ENCODE measurements at regions of chr2 and their contacts with region 1.

Region 1: DNA sequence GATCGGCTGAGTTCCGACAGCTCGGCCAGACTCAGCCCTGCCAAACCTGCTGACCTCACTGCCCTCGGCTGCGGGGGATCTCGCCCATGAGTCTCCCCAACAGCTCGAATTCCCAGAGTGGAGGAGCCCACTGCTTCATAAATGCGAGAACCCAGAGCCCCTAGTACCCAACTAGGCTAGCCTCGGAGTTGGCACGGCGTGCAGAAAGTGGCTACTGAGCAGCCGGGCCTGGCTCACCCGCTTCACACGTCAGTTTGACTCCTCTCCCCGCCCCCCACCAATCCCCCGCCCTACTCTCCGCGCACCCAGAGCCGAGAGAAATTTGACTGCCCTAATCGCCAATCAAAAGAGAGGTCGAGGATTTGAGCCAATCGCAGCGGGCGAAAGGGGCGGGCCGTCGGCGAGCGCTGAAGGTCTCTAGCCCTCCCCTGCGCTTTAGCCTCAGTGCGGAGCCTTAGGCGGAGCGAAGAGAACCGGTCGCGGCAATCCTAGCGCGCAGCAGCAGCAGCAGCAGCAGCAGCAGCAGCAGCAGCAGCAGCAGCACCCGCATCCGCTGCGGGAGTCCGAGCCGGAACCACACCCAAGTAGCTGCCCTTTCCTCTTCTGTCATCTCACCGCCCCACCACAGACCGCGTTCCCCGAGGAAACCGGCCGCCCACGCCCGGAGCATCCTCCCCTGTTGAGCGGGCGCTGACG is at the start of gene GLS:
- DNase-seq: peak; percentile 92 to 97 (median 95)
- H3K4me3 ChIP-seq: peak within 1 kb of the TSS; percentile 95
- H3K4me3 Mint-ChIP-seq: peak within 1 kb of the TSS; percentile 97 to 99 (median 98)
- H3K27ac ChIP-seq: peak within 1 kb of the TSS; percentile 92
- H3K27ac Mint-ChIP-seq: peak within 1 kb of the TSS; percentile 95 to 99 (median 98)
- H3K4me1 ChIP-seq: peaks cover 54% of the 10 kb centered on the region
- H3K4me1 Mint-ChIP-seq: peaks cover 41 to 65% (median 50%) of the 10 kb centered on the region in 3 donors
- H3K27me3 ChIP-seq: no peaks in the 10 kb centered on the region
- H3K27me3 Mint-ChIP-seq: peaks cover 0 to 6% of the 10 kb centered on the region in 2 donors
- total RNA-seq, gene GLS: 209 to 222 TPM

Region 2: DNA sequence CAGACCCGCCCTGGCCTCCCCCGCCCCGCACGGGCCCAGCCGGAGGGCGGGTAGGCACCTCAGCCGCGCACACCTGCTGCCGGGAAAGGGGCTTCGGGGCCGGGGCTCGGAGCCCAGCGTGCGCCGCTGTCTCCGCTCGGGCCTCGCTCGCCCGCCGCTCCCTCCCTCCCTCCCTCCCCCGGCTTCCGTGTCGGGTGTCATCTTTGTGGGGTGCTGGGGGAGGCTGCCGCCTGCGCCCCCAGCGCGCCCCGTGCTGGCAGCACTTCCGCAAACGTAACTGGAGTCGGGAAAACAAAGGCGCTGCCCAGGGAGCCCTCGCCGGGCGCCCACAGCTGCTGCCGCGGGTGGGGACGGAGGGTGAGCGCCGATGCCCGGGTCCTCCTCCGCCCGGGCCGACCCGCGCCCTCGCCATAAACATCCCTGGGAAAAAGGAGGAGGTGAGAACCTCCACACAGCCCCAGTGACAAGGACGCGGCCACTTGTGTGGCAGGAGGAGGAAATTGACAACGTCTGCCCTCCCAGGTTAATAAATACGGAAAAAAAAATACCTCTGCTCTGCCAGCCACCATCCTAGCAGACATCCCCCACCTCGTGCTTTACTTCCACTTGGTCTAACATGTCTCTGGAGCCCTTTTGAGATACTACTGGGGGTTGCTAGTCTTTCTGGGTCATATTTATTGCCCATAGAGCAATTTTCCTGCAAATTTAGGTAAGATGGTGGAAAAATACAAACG is 471.8 kb before region 1 on chr2:
- CTCF ChIA-PET with region 1: no interaction called
- POLR2A ChIA-PET with region 1: interaction called, 14 read pairs
- DNase-seq: peak; percentile 71 to 91 (median 85)
- H3K4me3 ChIP-seq: peak overlapping the region; percentile 61
- H3K4me3 Mint-ChIP-seq: peak overlapping the region; percentile 88 to 95 (median 93)
- H3K27ac ChIP-seq: peak overlapping the region; percentile 97
- H3K27ac Mint-ChIP-seq: peak overlapping the region; percentile 97 to 99 (median 98)
- H3K4me1 ChIP-seq: peaks cover 56% of the 10 kb centered on the region
- H3K4me1 Mint-ChIP-seq: peaks cover 44 to 49% (median 46%) of the 10 kb centered on the region in 3 donors
- H3K27me3 ChIP-seq: no peaks in the 10 kb centered on the region
- H3K27me3 Mint-ChIP-seq: peaks cover 0 to 5% of the 10 kb centered on the region in 2 donors

Region 3: DNA sequence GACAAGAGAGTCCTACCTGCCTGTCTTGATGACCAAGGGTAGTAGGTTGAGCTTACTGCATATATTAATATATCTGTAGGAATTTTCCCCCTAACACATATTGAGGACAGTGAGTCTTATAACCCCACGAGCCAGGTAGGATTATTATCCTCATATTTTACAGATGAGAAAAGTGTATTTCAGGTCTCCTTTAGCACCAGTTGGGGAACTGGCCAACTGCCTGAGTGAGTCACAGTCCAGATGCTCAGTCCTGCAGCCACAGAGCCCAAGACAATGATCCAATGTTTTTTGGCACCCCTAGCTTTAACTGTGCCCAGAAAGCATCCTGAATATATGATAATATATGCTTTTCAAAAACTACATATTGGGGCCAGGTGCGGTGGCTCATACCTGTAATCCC is 30.8 kb before region 1 on chr2:
- CTCF ChIA-PET with region 1: interaction called, 30 read pairs
- POLR2A ChIA-PET with region 1: interaction called, 20 read pairs
- DNase-seq: no peak
- H3K4me3 ChIP-seq: no peak overlapping the region
- H3K4me3 Mint-ChIP-seq: no peak overlapping the region
- H3K27ac ChIP-seq: no peak overlapping the region
- H3K27ac Mint-ChIP-seq: no peak overlapping the region
- H3K4me1 ChIP-seq: no peaks in the 10 kb centered on the region
- H3K4me1 Mint-ChIP-seq: peaks cover 0 to 3% (median 2%) of the 10 kb centered on the region in 3 donors
- H3K27me3 ChIP-seq: no peaks in the 10 kb centered on the region
- H3K27me3 Mint-ChIP-seq: no peaks in the 10 kb centered on the region

Region 4: DNA sequence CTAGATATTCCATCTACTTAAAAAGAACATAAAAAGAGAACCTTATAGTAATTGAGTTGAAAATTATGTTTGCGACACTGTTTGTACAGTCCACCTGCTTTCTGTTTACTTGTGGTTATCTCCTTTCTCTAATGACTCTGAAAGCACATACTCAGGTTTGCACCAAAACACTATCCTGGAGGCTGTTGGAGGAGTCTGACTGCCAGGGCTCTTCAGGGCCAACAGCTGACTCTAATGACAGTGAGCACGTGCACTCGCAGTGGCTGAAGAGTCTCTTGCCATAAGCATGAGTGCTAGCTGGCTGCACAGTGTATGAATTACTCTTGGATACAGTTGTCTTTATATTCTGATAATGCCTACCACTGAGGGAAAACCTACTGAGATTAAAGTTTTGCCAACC is 16.6 kb before region 1 on chr2:
- CTCF ChIA-PET with region 1: interaction called, 10 read pairs
- POLR2A ChIA-PET with region 1: interaction called, 9 read pairs
- DNase-seq: no peak
- H3K4me3 ChIP-seq: no peak overlapping the region
- H3K4me3 Mint-ChIP-seq: no peak overlapping the region
- H3K27ac ChIP-seq: no peak overlapping the region
- H3K27ac Mint-ChIP-seq: peak overlapping the region in 2 of 8 donors; percentile 49 to 77
- H3K4me1 ChIP-seq: peaks cover 18% of the 10 kb centered on the region
- H3K4me1 Mint-ChIP-seq: peaks cover 20 to 26% (median 25%) of the 10 kb centered on the region in 3 donors
- H3K27me3 ChIP-seq: no peaks in the 10 kb centered on the region
- H3K27me3 Mint-ChIP-seq: no peaks in the 10 kb centered on the region

Region 5: DNA sequence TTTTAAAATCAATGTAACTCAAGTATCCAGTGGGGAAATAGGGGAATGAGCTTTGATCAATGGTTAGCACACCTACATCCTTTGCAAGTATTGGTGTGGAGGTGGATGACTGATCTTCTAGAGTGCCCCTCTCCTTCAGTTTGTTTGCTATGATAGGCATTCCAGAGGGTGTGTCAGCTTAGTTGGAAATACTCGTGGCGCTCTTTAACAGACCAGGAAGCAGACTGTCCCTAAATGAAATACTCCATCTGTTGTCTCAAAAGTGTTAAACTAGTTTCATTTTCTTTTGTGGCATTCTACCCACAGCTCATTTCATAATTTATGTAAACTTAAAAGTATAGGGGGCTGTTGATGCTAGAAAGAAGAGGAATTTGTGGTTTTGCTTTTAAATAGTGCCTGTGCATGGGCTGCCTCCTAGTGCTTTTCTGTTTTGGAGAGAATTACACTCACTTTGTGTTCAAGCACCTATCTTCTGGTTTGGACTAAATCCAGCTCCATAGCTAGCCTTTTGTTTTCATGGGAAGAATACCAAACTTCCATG is 67.3 kb after region 1 on chr2:
- CTCF ChIA-PET with region 1: interaction called, 4 read pairs
- POLR2A ChIA-PET with region 1: interaction called, 16 read pairs
- DNase-seq: peak in 2 of 5 donors; percentile 44 to 72
- H3K4me3 ChIP-seq: no peak overlapping the region
- H3K4me3 Mint-ChIP-seq: peak overlapping the region in 6 of 7 donors; percentile 0 to 71 (median 36)
- H3K27ac ChIP-seq: no peak overlapping the region
- H3K27ac Mint-ChIP-seq: peak overlapping the region; percentile 31 to 98 (median 86)
- H3K4me1 ChIP-seq: peaks cover 28% of the 10 kb centered on the region
- H3K4me1 Mint-ChIP-seq: peaks cover 10 to 33% (median 22%) of the 10 kb centered on the region in 3 donors
- H3K27me3 ChIP-seq: no peaks in the 10 kb centered on the region
- H3K27me3 Mint-ChIP-seq: no peaks in the 10 kb centered on the region

Region 6: GRCh38 chr2:190979906-190980629 is 99.5 kb after region 1 on chr2:
- CTCF ChIA-PET with region 1: no interaction called
- POLR2A ChIA-PET with region 1: no interaction called
- DNase-seq: no peak
- H3K4me3 ChIP-seq: no peak overlapping the region
- H3K4me3 Mint-ChIP-seq: no peak overlapping the region
- H3K27ac ChIP-seq: no peak overlapping the region
- H3K27ac Mint-ChIP-seq: peak overlapping the region; percentile 17 to 92 (median 52)
- H3K4me1 ChIP-seq: peaks cover 20% of the 10 kb centered on the region
- H3K4me1 Mint-ChIP-seq: peaks cover 12 to 23% (median 12%) of the 10 kb centered on the region in 3 donors
- H3K27me3 ChIP-seq: no peaks in the 10 kb centered on the region
- H3K27me3 Mint-ChIP-seq: no peaks in the 10 kb centered on the region

Region 7: GRCh38 chr2:191023235-191023679 is 142.7 kb after region 1 on chr2:
- CTCF ChIA-PET with region 1: interaction called, 3 read pairs
- POLR2A ChIA-PET with region 1: interaction called, 13 read pairs
- DNase-seq: peak in 2 of 5 donors; percentile 44
- H3K4me3 ChIP-seq: peak overlapping the region; percentile 66
- H3K4me3 Mint-ChIP-seq: no peak overlapping the region
- H3K27ac ChIP-seq: no peak overlapping the region
- H3K27ac Mint-ChIP-seq: no peak overlapping the region
- H3K4me1 ChIP-seq: peaks cover 53% of the 10 kb centered on the region
- H3K4me1 Mint-ChIP-seq: peaks cover 22 to 44% (median 30%) of the 10 kb centered on the region in 3 donors
- H3K27me3 ChIP-seq: no peaks in the 10 kb centered on the region
- H3K27me3 Mint-ChIP-seq: no peaks in the 10 kb centered on the region

Region 8: GRCh38 chr2:191677646-191678436 is 797.3 kb after region 1 on chr2 and contains the start of gene NABP1:
- CTCF ChIA-PET with region 1: no interaction called
- POLR2A ChIA-PET with region 1: interaction called, 17 read pairs
- DNase-seq: peak; percentile 98 to 99 (median 99)
- H3K4me3 ChIP-seq: peak within 1 kb of the TSS; percentile 98
- H3K4me3 Mint-ChIP-seq: peak within 1 kb of the TSS; percentile 89 to 99 (median 98)
- H3K27ac ChIP-seq: peak within 1 kb of the TSS; percentile 100
- H3K27ac Mint-ChIP-seq: peak within 1 kb of the TSS; percentile 98 to 100 (median 99)
- H3K4me1 ChIP-seq: peaks cover 71% of the 10 kb centered on the region
- H3K4me1 Mint-ChIP-seq: peaks cover 61 to 72% (median 71%) of the 10 kb centered on the region in 3 donors
- H3K27me3 ChIP-seq: no peaks in the 10 kb centered on the region
- H3K27me3 Mint-ChIP-seq: no peaks in the 10 kb centered on the region
- total RNA-seq, gene NABP1: 44.9 to 48.2 TPM